ENCODE measurements at regions of chr4 and their contacts with region 1.

Region 1: GRCh38 chr4:77156533-77156911 is 485 bp upstream of the CCNG2 start:
- DNase-seq: peak; percentile 93 to 97 (median 93)
- H3K4me3 ChIP-seq: peak overlapping the region; percentile 74
- H3K27ac ChIP-seq: peak overlapping the region; percentile 87 to 95
- H3K4me1 ChIP-seq: no peaks in the 10 kb centered on the region
- H3K27me3 ChIP-seq: no peaks in the 10 kb centered on the region
- CTCF ChIP-seq: no peak
- EP300 ChIP-seq: no peak
- POLR2A ChIP-seq: no peak

Region 2: DNA sequence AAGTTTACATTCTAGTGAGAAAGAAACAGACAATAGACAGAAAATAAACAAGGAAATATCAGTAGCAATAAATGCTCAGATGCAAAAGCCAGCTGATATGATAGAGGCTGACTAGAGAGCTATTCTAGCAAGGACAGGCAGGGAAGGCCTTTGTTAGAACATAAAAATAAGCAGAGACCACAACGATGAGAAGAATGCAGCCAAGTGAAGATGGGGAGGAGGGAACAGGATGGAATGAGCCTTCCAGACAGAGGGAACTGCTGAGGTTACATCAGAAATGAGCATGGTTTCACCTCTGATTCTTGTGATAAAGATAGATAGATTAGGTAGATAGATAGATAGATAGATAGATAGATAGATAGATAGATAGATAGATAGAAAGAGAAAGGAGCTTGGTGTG is 251.0 kb before region 1 on chr4:
- intact Hi-C with region 1: no loop called
- DNase-seq: no peak
- H3K4me3 ChIP-seq: no peak overlapping the region
- H3K27ac ChIP-seq: no peak overlapping the region
- H3K4me1 ChIP-seq: no peaks in the 10 kb centered on the region
- H3K27me3 ChIP-seq: no peaks in the 10 kb centered on the region
- CTCF ChIP-seq: no peak
- EP300 ChIP-seq: no peak
- POLR2A ChIP-seq: no peak

Region 3: DNA sequence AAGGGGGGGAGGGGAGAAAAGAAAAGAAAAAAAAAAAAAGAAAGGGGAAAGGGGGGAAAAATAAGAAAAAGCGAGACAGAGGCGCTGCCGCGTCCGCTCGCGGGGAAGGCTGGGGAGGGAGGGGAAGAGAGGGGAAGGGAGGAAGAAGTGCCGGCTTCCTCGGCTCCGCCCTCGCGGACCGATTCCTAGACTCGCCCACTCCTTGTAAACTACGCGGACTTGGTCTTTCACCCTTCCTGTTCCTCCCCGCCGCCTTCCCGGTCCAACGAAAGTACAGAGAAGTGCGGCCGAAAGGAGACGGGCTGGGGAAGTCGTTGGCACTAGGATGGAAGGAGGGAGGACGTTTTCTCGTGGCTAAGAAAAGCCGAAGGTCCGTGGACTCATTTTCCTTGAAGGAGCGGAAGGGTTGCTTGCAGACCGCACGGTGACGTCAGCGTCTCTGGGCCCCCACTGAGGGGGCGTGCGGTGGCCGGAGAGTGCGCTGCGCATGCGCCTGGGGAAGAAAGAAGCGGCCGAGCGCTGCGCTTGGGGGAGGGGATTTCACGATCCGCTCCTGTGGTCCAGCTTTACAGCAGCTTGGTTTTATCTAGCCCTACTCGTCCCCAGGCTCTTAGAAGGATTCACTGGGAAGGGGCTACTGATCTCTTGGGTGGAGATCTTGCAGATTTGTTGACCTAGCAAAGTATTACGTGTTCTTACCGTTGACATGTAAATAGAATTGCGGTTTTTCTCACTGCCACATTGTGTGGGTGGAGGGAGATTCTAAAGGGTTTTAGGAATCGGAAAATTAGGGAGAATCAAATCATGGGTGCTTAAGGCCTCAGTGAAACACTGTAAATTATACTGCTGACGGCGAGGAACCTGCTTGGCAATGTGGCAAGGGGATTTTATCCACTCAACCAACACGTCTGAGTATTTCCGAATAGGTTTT is 80.4 kb before region 1 on chr4 and contains the start of gene CCNI:
- intact Hi-C with region 1: loop called in 2 of 4 experiments (anchors 1 to 5 kb)
- DNase-seq: peak; percentile 97 to 98 (median 98)
- H3K4me3 ChIP-seq: peak within 1 kb of the TSS; percentile 85
- H3K27ac ChIP-seq: peak within 1 kb of the TSS; percentile 95 to 98
- H3K4me1 ChIP-seq: peaks cover 3% of the 10 kb centered on the region
- H3K27me3 ChIP-seq: no peaks in the 10 kb centered on the region
- CTCF ChIP-seq: peak in 1 of 3 donors; percentile 34
- EP300 ChIP-seq: no peak
- POLR2A ChIP-seq: peak; percentile 69
- total RNA-seq, gene CCNI: 220 to 564 (median 355) TPM